CD8-positive, alpha-beta memory T cell (primary cell): ENCODE measurements at regions of chr9 and their contacts with region 1.

Region 1: DNA sequence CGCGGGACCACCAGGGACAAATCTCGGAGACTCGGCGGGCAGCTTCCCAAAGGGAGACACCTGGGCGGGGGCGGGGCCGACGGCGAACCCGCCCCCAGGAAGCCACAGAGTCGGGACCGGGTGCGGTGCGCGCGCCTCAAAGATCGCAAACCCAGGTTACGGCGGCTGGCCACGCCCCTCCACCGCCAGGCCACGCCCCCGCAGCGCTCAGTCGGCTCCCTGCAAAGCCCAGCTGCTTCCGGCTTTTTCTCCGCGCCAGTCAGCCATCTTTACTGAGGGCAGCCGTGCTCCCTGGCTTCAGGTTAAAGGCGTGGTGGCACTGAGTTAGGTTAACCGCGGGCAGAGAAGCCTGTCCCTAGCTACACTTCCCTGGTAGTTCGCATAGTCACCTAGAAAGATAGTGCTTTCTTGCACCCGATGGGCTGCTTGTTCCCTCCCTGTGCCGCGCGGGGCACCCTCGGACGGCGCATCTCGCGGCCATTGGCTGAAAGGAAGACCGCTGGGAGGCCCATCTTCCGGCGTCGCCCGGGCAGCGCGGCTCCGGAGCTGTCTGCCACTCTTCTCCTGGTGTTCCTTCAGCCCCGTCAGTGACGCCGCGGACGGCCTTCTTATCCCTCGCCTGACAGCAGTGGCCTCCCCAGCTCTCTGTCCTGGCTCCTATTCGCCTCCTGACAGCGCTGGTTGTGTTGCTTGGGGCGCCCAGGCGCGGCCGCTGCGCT is at the start of gene TBC1D2:
- DNase-seq: peak; percentile 97 to 98 (median 97)
- H3K4me3 ChIP-seq: peak within 1 kb of the TSS; percentile 99
- H3K4me3 Mint-ChIP-seq: peak within 1 kb of the TSS; percentile 84 to 98 (median 91)
- H3K27ac ChIP-seq: peak within 1 kb of the TSS; percentile 91
- H3K27ac Mint-ChIP-seq: peak within 1 kb of the TSS; percentile 87 to 98 (median 94)
- H3K4me1 ChIP-seq: peaks cover 22% of the 10 kb centered on the region
- H3K4me1 Mint-ChIP-seq: peaks cover 30 to 41% (median 38%) of the 10 kb centered on the region in 3 donors
- H3K27me3 ChIP-seq: no peaks in the 10 kb centered on the region
- H3K27me3 Mint-ChIP-seq: no peaks in the 10 kb centered on the region
- total RNA-seq, gene TBC1D2: 3.3 to 4.8 TPM

Region 2: GRCh38 chr9:97632985-97633858 is 622.5 kb before region 1 on chr9 and contains the starts of genes NCBP1 and TSTD2:
- CTCF ChIA-PET with region 1: interaction called, 4 read pairs
- POLR2A ChIA-PET with region 1: interaction called, 11 read pairs
- DNase-seq: peak; percentile 90 to 98 (median 98)
- H3K4me3 ChIP-seq: peak within 1 kb of the TSS; percentile 75
- H3K4me3 Mint-ChIP-seq: peak within 1 kb of the TSS; percentile 95 to 99 (median 98)
- H3K27ac ChIP-seq: peak within 1 kb of the TSS; percentile 89
- H3K27ac Mint-ChIP-seq: peak within 1 kb of the TSS; percentile 99 to 100 (median 100)
- H3K4me1 ChIP-seq: peaks cover 46% of the 10 kb centered on the region
- H3K4me1 Mint-ChIP-seq: peaks cover 49 to 76% (median 69%) of the 10 kb centered on the region in 3 donors
- H3K27me3 ChIP-seq: no peaks in the 10 kb centered on the region
- H3K27me3 Mint-ChIP-seq: no peaks in the 10 kb centered on the region
- total RNA-seq, gene NCBP1: 47.7 to 49.6 TPM
- total RNA-seq, gene TSTD2: 13.8 to 14.7 TPM

Region 3: GRCh38 chr9:98045234-98046179 is 210.2 kb before region 1 on chr9:
- CTCF ChIA-PET with region 1: no interaction called
- POLR2A ChIA-PET with region 1: interaction called, 10 read pairs
- DNase-seq: peak in 4 of 5 donors; percentile 35 to 75 (median 61)
- H3K4me3 ChIP-seq: peak overlapping the region; percentile 47
- H3K4me3 Mint-ChIP-seq: peak overlapping the region; percentile 66 to 86 (median 81)
- H3K27ac ChIP-seq: peak overlapping the region; percentile 55
- H3K27ac Mint-ChIP-seq: peak overlapping the region; percentile 49 to 97 (median 90)
- H3K4me1 ChIP-seq: peaks cover 16% of the 10 kb centered on the region
- H3K4me1 Mint-ChIP-seq: peaks cover 22 to 40% (median 35%) of the 10 kb centered on the region in 3 donors
- H3K27me3 ChIP-seq: no peaks in the 10 kb centered on the region
- H3K27me3 Mint-ChIP-seq: no peaks in the 10 kb centered on the region

Region 4: GRCh38 chr9:98074115-98074990 is 181.4 kb before region 1 on chr9:
- CTCF ChIA-PET with region 1: interaction called, 18 read pairs
- POLR2A ChIA-PET with region 1: interaction called, 4 read pairs
- DNase-seq: peak; percentile 51 to 80 (median 60)
- H3K4me3 ChIP-seq: no peak overlapping the region
- H3K4me3 Mint-ChIP-seq: peak overlapping the region in 6 of 7 donors; percentile 54 to 79 (median 65)
- H3K27ac ChIP-seq: no peak overlapping the region
- H3K27ac Mint-ChIP-seq: peak overlapping the region; percentile 79 to 99 (median 92)
- H3K4me1 ChIP-seq: peaks cover 33% of the 10 kb centered on the region
- H3K4me1 Mint-ChIP-seq: peaks cover 26 to 36% (median 30%) of the 10 kb centered on the region in 3 donors
- H3K27me3 ChIP-seq: no peaks in the 10 kb centered on the region
- H3K27me3 Mint-ChIP-seq: no peaks in the 10 kb centered on the region

Region 5: GRCh38 chr9:98118640-98119601 is 136.8 kb before region 1 on chr9 and contains the start of gene TRIM14:
- CTCF ChIA-PET with region 1: interaction called, 14 read pairs
- POLR2A ChIA-PET with region 1: interaction called, 27 read pairs
- DNase-seq: peak; percentile 46 to 73 (median 58)
- H3K4me3 ChIP-seq: peak within 1 kb of the TSS; percentile 95
- H3K4me3 Mint-ChIP-seq: peak within 1 kb of the TSS; percentile 86 to 95 (median 90)
- H3K27ac ChIP-seq: peak within 1 kb of the TSS; percentile 59
- H3K27ac Mint-ChIP-seq: peak within 1 kb of the TSS; percentile 85 to 99 (median 96)
- H3K4me1 ChIP-seq: peaks cover 43% of the 10 kb centered on the region
- H3K4me1 Mint-ChIP-seq: peaks cover 45 to 70% (median 61%) of the 10 kb centered on the region in 3 donors
- H3K27me3 ChIP-seq: no peaks in the 10 kb centered on the region
- H3K27me3 Mint-ChIP-seq: no peaks in the 10 kb centered on the region
- total RNA-seq, gene TRIM14: 46.2 to 52.1 TPM

Region 6: DNA sequence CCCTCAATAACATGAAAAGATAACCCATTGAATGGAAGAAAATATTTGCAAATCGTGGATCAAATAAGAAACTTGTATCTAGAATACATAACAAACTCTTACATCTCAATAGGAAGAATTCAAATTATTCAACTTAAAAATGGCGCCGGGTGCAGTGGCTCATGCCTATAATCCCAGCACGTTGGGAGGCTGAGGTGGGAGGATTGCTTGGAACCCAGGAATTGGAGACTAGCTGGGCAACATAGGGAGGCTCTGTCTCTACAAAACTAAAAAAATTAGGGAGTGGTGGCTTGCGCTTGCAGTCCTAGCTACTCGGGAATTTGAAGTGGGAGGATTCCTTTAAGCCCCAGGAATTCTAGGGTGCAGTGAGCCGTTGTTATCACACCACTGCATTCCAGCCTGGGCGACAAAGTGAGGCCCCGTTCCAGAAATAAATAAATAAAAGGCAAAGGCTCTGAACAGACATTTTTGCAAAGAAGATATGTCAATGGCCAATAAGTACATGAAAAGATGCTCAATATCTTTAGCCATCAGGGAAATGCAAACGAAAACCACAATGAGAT is 21.3 kb after region 1 on chr9:
- CTCF ChIA-PET with region 1: no interaction called
- POLR2A ChIA-PET with region 1: no interaction called
- DNase-seq: no peak
- H3K4me3 ChIP-seq: no peak overlapping the region
- H3K4me3 Mint-ChIP-seq: no peak overlapping the region
- H3K27ac ChIP-seq: no peak overlapping the region
- H3K27ac Mint-ChIP-seq: no peak overlapping the region
- H3K4me1 ChIP-seq: no peaks in the 10 kb centered on the region
- H3K4me1 Mint-ChIP-seq: no peaks in the 10 kb centered on the region
- H3K27me3 ChIP-seq: no peaks in the 10 kb centered on the region
- H3K27me3 Mint-ChIP-seq: peaks cover 10 to 38% of the 10 kb centered on the region in 2 donors

Region 7: GRCh38 chr9:98287383-98287782 is 31.6 kb after region 1 on chr9:
- CTCF ChIA-PET with region 1: no interaction called
- POLR2A ChIA-PET with region 1: no interaction called
- DNase-seq: no peak
- H3K4me3 ChIP-seq: no peak overlapping the region
- H3K4me3 Mint-ChIP-seq: no peak overlapping the region
- H3K27ac ChIP-seq: no peak overlapping the region
- H3K27ac Mint-ChIP-seq: no peak overlapping the region
- H3K4me1 ChIP-seq: no peaks in the 10 kb centered on the region
- H3K4me1 Mint-ChIP-seq: no peaks in the 10 kb centered on the region
- H3K27me3 ChIP-seq: no peaks in the 10 kb centered on the region
- H3K27me3 Mint-ChIP-seq: peaks cover 0 to 20% of the 10 kb centered on the region in 2 donors